Endothelial cell of umbilical vein (primary cell): ENCODE measurements at regions of chr17 and their contacts with region 1.

Region 1: GRCh38 chr17:16456742-16457316 is 35.2 kb downstream of the LRRC75A start:
- DNase-seq: no peak
- H3K4me3 ChIP-seq: no peak overlapping the region
- H3K27ac ChIP-seq: no peak overlapping the region
- H3K4me1 ChIP-seq: peaks cover 10% of the 10 kb centered on the region
- H3K27me3 ChIP-seq: no peaks in the 10 kb centered on the region
- CTCF ChIP-seq: no peak
- POLR2A ChIP-seq: no peak

Region 2: GRCh38 chr17:16438557-16439302 is 18.1 kb before region 1 on chr17:
- CTCF ChIA-PET with region 1: interaction called, 29 read pairs
- POLR2A ChIA-PET with region 1: interaction called, 14 read pairs
- dilution Hi-C with region 1: no loop called
- intact Hi-C with region 1: no loop called
- DNase-seq: peak; percentile 100
- H3K4me3 ChIP-seq: peak overlapping the region; percentile 77 to 97 (median 89)
- H3K27ac ChIP-seq: peak overlapping the region; percentile 67
- H3K4me1 ChIP-seq: peaks cover 35% of the 10 kb centered on the region
- H3K27me3 ChIP-seq: no peaks in the 10 kb centered on the region
- CTCF ChIP-seq: no peak
- POLR2A ChIP-seq: peak; percentile 99

Region 3: DNA sequence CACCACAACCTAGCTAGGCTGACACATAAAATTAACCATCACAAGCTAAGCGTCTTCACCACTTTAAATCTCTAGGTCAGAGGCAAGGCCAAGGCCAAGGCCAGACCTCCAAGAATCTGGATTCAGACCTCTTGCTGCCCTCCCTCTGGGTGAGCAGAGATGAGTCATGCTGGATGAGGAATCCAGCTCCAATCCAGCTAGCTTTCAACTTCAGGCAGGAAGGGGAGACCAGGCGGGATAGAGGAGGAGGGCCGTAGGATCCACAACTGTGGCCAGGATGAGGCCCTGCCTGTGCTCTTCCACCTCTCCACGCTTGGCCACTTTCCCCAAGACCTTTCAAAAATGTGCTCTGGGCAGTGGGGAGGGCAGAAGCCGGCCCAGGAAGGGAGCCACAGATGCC is 20.4 kb after region 1 on chr17:
- CTCF ChIA-PET with region 1: interaction called, 43 read pairs
- POLR2A ChIA-PET with region 1: no interaction called
- dilution Hi-C with region 1: no loop called
- intact Hi-C with region 1: no loop called
- DNase-seq: peak; percentile 84
- H3K4me3 ChIP-seq: no peak overlapping the region
- H3K27ac ChIP-seq: peak overlapping the region; percentile 60
- H3K4me1 ChIP-seq: peaks cover 8% of the 10 kb centered on the region
- H3K27me3 ChIP-seq: no peaks in the 10 kb centered on the region
- CTCF ChIP-seq: no peak
- POLR2A ChIP-seq: no peak

Region 4: GRCh38 chr17:16512011-16512410 is 55.2 kb after region 1 on chr17:
- CTCF ChIA-PET with region 1: interaction called, 440 read pairs
- POLR2A ChIA-PET with region 1: no interaction called
- dilution Hi-C with region 1: no loop called
- intact Hi-C with region 1: no loop called
- DNase-seq: no peak
- H3K4me3 ChIP-seq: no peak overlapping the region
- H3K27ac ChIP-seq: no peak overlapping the region
- H3K4me1 ChIP-seq: peaks cover 9% of the 10 kb centered on the region
- H3K27me3 ChIP-seq: peaks cover 0 to 12% of the 10 kb centered on the region in 2 experiments
- CTCF ChIP-seq: no peak
- POLR2A ChIP-seq: no peak

Region 5: DNA sequence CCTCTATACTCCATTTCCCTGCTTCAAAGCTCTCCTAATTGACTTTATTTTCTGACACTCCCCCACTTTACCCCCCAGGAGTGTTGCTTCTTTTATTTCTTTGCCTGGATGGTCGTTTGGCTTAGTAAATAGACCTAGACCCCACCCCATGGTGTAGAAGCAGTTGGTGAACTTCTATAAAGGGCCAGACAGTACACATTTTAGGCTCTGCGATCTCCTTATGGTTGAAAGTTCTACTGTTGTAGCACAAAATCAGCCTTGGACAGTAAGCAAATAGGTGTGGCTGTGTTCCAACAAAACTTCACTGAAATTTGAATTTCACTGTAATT is 80.3 kb after region 1 on chr17:
- CTCF ChIA-PET with region 1: interaction called, 15 read pairs
- POLR2A ChIA-PET with region 1: no interaction called
- dilution Hi-C with region 1: no loop called
- intact Hi-C with region 1: no loop called
- DNase-seq: no peak
- H3K4me3 ChIP-seq: no peak overlapping the region
- H3K27ac ChIP-seq: no peak overlapping the region
- H3K4me1 ChIP-seq: peaks cover 2% of the 10 kb centered on the region
- H3K27me3 ChIP-seq: peaks cover 3 to 4% of the 10 kb centered on the region in 2 experiments
- CTCF ChIP-seq: no peak
- POLR2A ChIP-seq: no peak